ENCODE measurements at regions of chr7 and their contacts with region 1.

Region 1: DNA sequence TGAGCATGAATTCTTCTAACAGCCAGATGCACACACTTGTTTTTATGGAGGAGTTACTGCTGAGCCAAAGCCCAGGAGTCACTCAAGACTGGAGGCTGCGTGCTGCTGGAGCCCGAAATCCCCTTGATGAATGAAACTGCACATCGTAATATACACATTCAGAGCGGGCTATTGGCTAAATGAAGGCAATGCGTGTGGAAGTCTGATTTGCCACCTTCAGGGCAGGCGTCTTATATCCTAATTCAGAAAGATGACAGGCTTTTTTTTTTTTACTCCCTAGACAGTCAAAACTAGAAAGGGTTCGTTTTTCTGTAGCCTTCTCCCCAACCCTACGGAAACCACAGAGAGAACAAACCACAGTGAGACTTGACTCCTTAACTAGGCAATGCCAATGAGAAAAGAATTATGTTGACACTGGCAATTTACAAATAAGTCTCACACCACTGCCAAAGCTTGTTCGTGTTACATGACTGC is 227.2 kb upstream of the KLF14 start:
- DNase-seq: peak; percentile 75
- ATAC-seq: peak; percentile 69
- H3K4me3 ChIP-seq: peak overlapping the region; percentile 57 to 64
- H3K27ac ChIP-seq: peak overlapping the region; percentile 91
- H3K4me1 ChIP-seq: peaks cover 48 to 83% of the 10 kb centered on the region in 2 experiments
- H3K27me3 ChIP-seq: no peaks in the 10 kb centered on the region
- CTCF ChIP-seq: no peak
- POLR2A ChIP-seq: peak; percentile 66
- RAD21 ChIP-seq: no peak

Region 2: DNA sequence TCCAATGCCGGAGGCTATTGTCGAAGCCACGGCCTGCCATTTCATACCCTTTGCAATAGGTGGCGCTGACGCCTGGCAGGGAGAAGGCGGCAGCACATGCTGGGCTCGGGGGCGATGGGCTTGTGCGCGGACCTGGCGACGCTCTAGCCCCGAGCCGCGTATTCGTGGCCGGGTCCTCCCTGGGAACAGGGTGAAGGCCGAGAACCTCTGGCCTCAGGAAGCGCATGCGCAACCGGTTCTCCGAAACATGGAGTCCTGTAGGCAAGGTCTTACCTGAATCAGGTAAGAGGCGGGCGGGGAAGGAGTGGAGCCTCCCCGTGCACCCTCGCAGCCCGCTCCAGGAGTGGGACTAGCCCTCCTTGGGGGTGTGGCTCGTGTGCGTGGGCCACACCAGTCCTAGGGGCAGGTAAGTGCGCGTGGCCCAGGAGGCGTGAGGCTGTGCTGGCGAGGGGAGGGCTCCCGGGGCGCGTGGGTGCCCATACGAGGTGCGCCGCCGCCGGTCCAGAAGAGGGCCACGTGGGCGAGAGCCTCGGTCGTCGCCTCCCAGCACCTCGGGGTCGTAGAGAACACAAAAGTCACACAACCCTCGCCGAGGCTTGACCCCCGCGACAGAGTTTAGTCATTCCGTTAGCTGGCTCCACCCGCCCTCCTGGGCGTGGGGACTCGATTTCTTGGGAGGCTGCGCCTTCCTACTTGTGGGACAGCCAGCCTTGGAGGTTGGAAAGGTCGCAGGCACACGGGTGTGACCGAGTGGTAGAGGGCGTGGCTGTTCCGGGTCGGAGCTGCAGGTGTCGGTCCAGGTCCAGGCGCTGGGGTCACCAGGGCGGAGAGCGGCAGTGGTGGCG is 474.8 kb before region 1 on chr7:
- CTCF ChIA-PET with region 1: no interaction called
- POLR2A ChIA-PET with region 1: no interaction called
- RAD21 ChIA-PET with region 1: no interaction called
- intact Hi-C with region 1: no loop called
- DNase-seq: peak; percentile 78
- ATAC-seq: peak; percentile 93
- H3K4me3 ChIP-seq: peak overlapping the region; percentile 53 to 62
- H3K27ac ChIP-seq: peak overlapping the region; percentile 61
- H3K4me1 ChIP-seq: peaks cover 0 to 20% of the 10 kb centered on the region in 2 experiments; a peak in 1 of 4 replicates
- H3K27me3 ChIP-seq: no peaks in the 10 kb centered on the region
- CTCF ChIP-seq: peak; percentile 60 to 74 (median 72); a peak in 5 of 6 replicates
- POLR2A ChIP-seq: no peak
- RAD21 ChIP-seq: peak; percentile 65

Region 3: GRCh38 chr7:130912862-130913631 is 48.1 kb before region 1 on chr7:
- CTCF ChIA-PET with region 1: no interaction called
- POLR2A ChIA-PET with region 1: interaction called, 6 read pairs
- RAD21 ChIA-PET with region 1: no interaction called
- intact Hi-C with region 1: loop called (anchors 2 kb)
- DNase-seq: peak; percentile 91
- ATAC-seq: peak; percentile 56
- H3K4me3 ChIP-seq: peak overlapping the region; percentile 40 to 41
- H3K27ac ChIP-seq: peak overlapping the region; percentile 99
- H3K4me1 ChIP-seq: peaks cover 91 to 99% of the 10 kb centered on the region in 2 experiments
- H3K27me3 ChIP-seq: no peaks in the 10 kb centered on the region
- CTCF ChIP-seq: no peak
- POLR2A ChIP-seq: no peak
- RAD21 ChIP-seq: no peak

Region 4: GRCh38 chr7:130950741-130951140 is 10.4 kb before region 1 on chr7:
- CTCF ChIA-PET with region 1: interaction called, 12 read pairs
- POLR2A ChIA-PET with region 1: interaction called, 21 read pairs
- RAD21 ChIA-PET with region 1: no interaction called
- intact Hi-C with region 1: no loop called
- DNase-seq: no peak
- ATAC-seq: peak; percentile 17; the same call in 1 of the 2 replicates
- H3K4me3 ChIP-seq: no peak overlapping the region
- H3K27ac ChIP-seq: peak overlapping the region; percentile 91
- H3K4me1 ChIP-seq: peaks cover 61 to 94% of the 10 kb centered on the region in 2 experiments
- H3K27me3 ChIP-seq: no peaks in the 10 kb centered on the region
- CTCF ChIP-seq: no peak
- POLR2A ChIP-seq: no peak
- RAD21 ChIP-seq: no peak

Region 5: DNA sequence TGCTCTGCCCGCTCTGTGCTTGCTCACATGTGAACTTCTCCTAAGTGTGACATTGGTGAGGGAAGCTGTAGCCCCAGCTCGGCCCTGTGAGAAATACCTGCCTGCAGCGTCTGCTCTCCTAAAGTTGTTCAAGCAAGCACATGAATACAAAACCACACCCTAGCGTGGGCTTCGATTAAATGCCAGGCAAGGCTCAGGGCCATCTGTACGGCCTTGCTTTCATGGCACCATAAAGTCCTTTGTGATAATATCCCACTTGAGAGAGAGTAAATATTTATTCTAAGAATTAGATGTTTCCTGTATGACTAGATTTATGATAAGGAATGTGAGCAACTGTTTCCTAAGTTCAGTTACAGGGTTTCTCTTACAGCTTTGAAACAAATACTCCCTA is 35.7 kb after region 1 on chr7:
- CTCF ChIA-PET with region 1: interaction called, 9 read pairs
- POLR2A ChIA-PET with region 1: interaction called, 30 read pairs
- RAD21 ChIA-PET with region 1: no interaction called
- intact Hi-C with region 1: no loop called
- DNase-seq: peak; percentile 80
- ATAC-seq: peak; percentile 24
- H3K4me3 ChIP-seq: no peak overlapping the region
- H3K27ac ChIP-seq: peak overlapping the region; percentile 100
- H3K4me1 ChIP-seq: peaks cover 83 to 98% of the 10 kb centered on the region in 2 experiments
- H3K27me3 ChIP-seq: no peaks in the 10 kb centered on the region
- CTCF ChIP-seq: no peak
- POLR2A ChIP-seq: no peak
- RAD21 ChIP-seq: no peak

Region 6: GRCh38 chr7:131015655-131015954 is 54.4 kb after region 1 on chr7:
- CTCF ChIA-PET with region 1: no interaction called
- POLR2A ChIA-PET with region 1: interaction called, 10 read pairs
- RAD21 ChIA-PET with region 1: no interaction called
- intact Hi-C with region 1: loop called (anchors 2 kb)
- DNase-seq: peak; percentile 90
- ATAC-seq: peak; percentile 78
- H3K4me3 ChIP-seq: peak overlapping the region in 1 of 2 experiments; percentile 30; a peak in 2 of 4 replicates
- H3K27ac ChIP-seq: peak overlapping the region; percentile 96
- H3K4me1 ChIP-seq: peaks cover 88 to 89% of the 10 kb centered on the region in 2 experiments
- H3K27me3 ChIP-seq: no peaks in the 10 kb centered on the region
- CTCF ChIP-seq: no peak
- POLR2A ChIP-seq: no peak
- RAD21 ChIP-seq: no peak

Measured in HCT116 (cell line).